IMR-90 (cell line): ENCODE measurements at regions of chr18 and their contacts with region 1.

Region 1: GRCh38 chr18:46148810-46149209 is 44.6 kb downstream of the HAUS1 start:
- DNase-seq: peak; percentile 59
- ATAC-seq: peak; percentile 64
- H3K4me3 ChIP-seq: no peak overlapping the region
- H3K27ac ChIP-seq: no peak overlapping the region
- H3K4me1 ChIP-seq: peaks cover 13% of the 10 kb centered on the region
- H3K27me3 ChIP-seq: no peaks in the 10 kb centered on the region
- CTCF ChIP-seq: peak; percentile 76
- POLR2A ChIP-seq: no peak
- RAD21 ChIP-seq: peak; percentile 75

Region 2: GRCh38 chr18:46281185-46282176 is 132.7 kb after region 1 on chr18:
- CTCF ChIA-PET with region 1: interaction called, 4 read pairs
- POLR2A ChIA-PET with region 1: no interaction called
- dilution Hi-C with region 1: no loop called
- in situ Hi-C with region 1: no loop called
- intact Hi-C with region 1: loop called (anchors 2 kb)
- DNase-seq: peak; percentile 79
- ATAC-seq: peak; percentile 94
- H3K4me3 ChIP-seq: no peak overlapping the region
- H3K27ac ChIP-seq: no peak overlapping the region
- H3K4me1 ChIP-seq: peaks cover 14% of the 10 kb centered on the region
- H3K27me3 ChIP-seq: no peaks in the 10 kb centered on the region
- CTCF ChIP-seq: peak; percentile 83
- POLR2A ChIP-seq: no peak
- RAD21 ChIP-seq: peak; percentile 91

Region 3: DNA sequence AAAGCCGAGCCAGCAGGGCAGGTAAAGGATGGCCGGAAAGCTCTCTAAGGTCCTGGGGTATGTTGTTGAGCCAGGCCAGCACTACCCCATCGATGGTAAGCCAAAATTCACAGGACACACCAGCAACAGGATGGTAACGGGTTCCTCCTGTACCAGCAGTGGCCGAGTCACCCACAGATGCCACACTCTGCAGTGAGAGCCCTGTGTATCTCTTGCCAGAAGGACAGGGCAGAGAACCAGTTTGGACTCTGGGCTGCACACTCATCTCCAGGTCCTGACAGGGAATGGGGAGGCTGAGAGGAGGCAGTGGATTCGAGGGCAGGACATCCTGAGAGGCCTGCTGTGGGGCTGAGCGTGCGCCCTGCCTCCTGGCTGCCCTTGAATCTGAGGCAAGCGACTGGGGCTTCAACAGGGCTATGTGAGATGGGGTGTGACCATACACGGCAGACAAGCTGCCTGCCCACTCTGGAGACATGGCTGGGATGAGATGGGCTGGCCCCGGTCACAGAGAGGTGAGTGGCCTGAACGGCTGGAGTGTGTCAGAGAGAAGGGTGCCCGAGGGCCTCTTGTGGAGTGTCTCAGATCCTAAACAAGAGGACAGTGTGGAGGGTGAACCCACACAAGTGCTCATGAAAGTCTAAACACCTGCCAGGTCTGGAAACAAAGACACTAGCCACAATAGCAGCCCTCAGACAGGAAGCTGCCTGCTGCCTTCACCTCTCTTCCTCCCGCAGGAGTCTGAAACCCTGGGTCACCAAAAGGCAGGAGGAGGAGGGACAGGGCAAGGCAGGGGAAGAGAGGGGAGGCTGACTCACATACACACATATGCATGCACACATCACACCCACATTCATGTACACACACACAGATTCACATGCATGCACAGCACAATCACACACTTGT is 325.9 kb after region 1 on chr18:
- CTCF ChIA-PET with region 1: no interaction called
- POLR2A ChIA-PET with region 1: no interaction called
- dilution Hi-C with region 1: no loop called
- in situ Hi-C with region 1: loop called (anchors 5 kb)
- intact Hi-C with region 1: no loop called
- DNase-seq: no peak
- ATAC-seq: no peak
- H3K4me3 ChIP-seq: no peak overlapping the region
- H3K27ac ChIP-seq: no peak overlapping the region
- H3K4me1 ChIP-seq: no peaks in the 10 kb centered on the region
- H3K27me3 ChIP-seq: no peaks in the 10 kb centered on the region; the same call in 1 of the 2 replicates
- CTCF ChIP-seq: no peak
- POLR2A ChIP-seq: no peak
- RAD21 ChIP-seq: no peak

Region 4: DNA sequence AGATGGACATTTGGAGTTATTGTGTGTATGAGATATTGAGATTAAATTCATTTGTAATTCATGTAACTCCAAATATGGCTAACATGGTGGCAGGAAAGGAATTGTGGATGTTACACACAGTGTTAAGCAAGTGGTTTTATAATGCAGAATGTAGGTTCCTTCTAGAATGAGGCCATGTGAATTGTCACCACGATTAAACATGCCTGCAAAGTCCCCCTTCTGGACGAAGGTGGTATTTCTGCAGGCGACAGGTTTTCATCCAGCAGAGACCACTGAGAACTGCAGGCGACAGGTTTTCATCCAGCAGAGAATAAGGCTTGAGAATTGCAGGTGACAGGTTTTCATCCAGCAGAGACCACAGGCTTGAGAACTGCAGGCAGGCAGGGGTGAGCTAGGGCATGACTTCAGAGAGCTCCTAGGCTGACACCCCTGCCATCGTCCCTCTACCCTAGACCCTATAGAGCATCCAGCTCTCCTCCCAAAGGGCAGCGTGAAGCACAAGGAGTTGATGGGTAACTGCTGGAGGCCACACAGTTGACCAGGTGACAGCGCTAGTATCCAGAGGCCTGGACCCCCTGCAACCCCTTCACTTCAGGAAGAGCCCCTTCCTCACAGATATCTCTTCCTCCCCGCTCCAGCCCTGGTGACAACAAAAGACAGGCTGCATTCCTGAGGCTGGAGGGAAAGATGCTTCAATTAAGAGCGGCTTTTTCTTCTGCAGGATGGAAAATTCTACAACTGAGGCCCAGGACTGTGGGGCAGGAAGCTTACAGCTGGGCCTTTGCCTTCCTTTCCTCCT is 332.4 kb after region 1 on chr18:
- CTCF ChIA-PET with region 1: no interaction called
- POLR2A ChIA-PET with region 1: no interaction called
- dilution Hi-C with region 1: no loop called
- in situ Hi-C with region 1: loop called (anchors 5 kb)
- intact Hi-C with region 1: loop called (anchors 1 kb)
- DNase-seq: peak; percentile 52
- ATAC-seq: peak; percentile 75
- H3K4me3 ChIP-seq: no peak overlapping the region
- H3K27ac ChIP-seq: no peak overlapping the region
- H3K4me1 ChIP-seq: no peaks in the 10 kb centered on the region
- H3K27me3 ChIP-seq: no peaks in the 10 kb centered on the region; the same call in 1 of the 2 replicates
- CTCF ChIP-seq: peak; percentile 65
- POLR2A ChIP-seq: no peak
- RAD21 ChIP-seq: peak; percentile 69